ENCODE measurements at regions of chr7 and their contacts with region 1.

Region 1: DNA sequence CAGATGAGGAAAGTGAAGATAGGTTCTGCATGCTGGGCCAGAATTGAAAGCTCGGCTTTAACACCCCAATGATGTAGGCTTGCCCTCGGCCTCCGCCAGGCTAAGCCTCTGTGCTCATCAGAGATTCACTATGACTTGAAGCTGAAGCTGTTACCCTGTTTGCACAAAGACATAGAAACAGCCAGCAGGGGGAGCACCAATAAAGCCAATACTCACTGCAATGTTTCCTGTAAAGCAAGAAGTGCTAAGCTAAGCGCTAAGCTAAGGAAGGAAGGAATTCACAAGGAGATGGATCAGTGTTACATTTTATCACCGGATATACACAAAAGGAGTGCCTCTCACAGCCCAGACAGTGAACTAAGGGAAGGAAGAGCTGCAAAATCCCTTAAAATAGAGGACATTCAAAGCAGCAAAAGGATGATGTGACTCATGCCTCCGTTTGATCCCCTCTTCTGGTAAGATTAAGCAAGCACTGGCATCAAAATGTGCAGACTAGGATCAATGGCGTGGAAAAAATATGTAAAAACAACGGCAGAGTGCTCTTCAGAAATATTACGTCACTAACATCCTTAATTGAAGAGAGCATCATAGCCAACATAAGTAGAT is 153.8 kb downstream of the COBL start:
- DNase-seq: peak; percentile 77
- H3K4me3 ChIP-seq: no peak overlapping the region
- H3K27ac ChIP-seq: no peak overlapping the region
- H3K4me1 ChIP-seq: no peaks in the 10 kb centered on the region
- H3K27me3 ChIP-seq: no peaks in the 10 kb centered on the region
- CTCF ChIP-seq: peak; percentile 83

Region 2: GRCh38 chr7:50467817-50468610 is 694.8 kb before region 1 on chr7:
- CTCF ChIA-PET with region 1: interaction called, 3 read pairs
- POLR2A ChIA-PET with region 1: no interaction called
- intact Hi-C with region 1: loop called (anchors 1 kb)
- DNase-seq: peak; percentile 78
- H3K4me3 ChIP-seq: no peak overlapping the region
- H3K27ac ChIP-seq: no peak overlapping the region
- H3K4me1 ChIP-seq: no peaks in the 10 kb centered on the region
- H3K27me3 ChIP-seq: no peaks in the 10 kb centered on the region
- CTCF ChIP-seq: peak; percentile 82

Region 3: DNA sequence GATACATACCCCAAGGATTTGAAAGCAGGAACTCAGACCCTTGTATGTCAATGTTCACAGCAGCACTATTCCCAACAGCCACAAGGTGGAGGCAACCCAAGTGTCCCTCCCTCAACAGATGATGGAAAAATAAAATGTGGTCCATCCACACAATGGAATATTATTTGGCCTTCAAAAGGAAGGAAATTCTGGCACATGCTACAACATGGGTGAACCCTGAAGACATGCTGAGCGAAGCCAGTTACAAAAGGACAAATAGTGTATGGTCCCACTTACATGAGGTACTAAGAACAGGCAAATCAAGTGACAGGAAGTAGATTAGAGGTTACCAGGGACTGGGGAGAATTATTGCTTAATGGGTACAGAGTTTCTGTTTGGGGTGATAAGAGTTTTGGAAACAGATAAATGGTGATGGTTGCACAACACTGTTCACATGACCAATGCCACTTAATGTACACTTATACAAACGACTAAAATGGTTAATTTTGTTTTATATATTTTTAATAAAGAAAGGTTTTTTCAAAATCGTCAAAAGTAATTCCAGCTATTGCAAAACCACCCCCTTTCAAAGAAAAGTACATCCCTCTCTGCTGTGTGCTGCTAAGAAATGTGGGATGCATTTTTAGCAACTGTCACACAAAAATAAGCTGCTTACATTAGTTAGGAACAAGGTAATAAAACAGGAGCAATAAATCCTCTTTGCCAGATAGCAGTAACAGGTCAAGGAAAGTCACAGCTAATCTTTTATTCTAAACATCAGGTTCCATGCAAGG is 465.8 kb before region 1 on chr7:
- CTCF ChIA-PET with region 1: no interaction called
- POLR2A ChIA-PET with region 1: no interaction called
- intact Hi-C with region 1: loop called (anchors 10 kb)
- DNase-seq: no peak
- H3K4me3 ChIP-seq: no peak overlapping the region
- H3K27ac ChIP-seq: no peak overlapping the region
- H3K4me1 ChIP-seq: no peaks in the 10 kb centered on the region
- H3K27me3 ChIP-seq: peaks cover 4% of the 10 kb centered on the region
- CTCF ChIP-seq: peak; percentile 28; the same call in 1 of the 2 replicates

Region 4: GRCh38 chr7:51366930-51367613 is 204.2 kb after region 1 on chr7:
- CTCF ChIA-PET with region 1: interaction called, 3 read pairs
- POLR2A ChIA-PET with region 1: no interaction called
- intact Hi-C with region 1: loop called (anchors 10 kb)
- DNase-seq: peak; percentile 7
- H3K4me3 ChIP-seq: no peak overlapping the region
- H3K27ac ChIP-seq: no peak overlapping the region
- H3K4me1 ChIP-seq: no peaks in the 10 kb centered on the region
- H3K27me3 ChIP-seq: no peaks in the 10 kb centered on the region
- CTCF ChIP-seq: peak; percentile 42

Region 5: DNA sequence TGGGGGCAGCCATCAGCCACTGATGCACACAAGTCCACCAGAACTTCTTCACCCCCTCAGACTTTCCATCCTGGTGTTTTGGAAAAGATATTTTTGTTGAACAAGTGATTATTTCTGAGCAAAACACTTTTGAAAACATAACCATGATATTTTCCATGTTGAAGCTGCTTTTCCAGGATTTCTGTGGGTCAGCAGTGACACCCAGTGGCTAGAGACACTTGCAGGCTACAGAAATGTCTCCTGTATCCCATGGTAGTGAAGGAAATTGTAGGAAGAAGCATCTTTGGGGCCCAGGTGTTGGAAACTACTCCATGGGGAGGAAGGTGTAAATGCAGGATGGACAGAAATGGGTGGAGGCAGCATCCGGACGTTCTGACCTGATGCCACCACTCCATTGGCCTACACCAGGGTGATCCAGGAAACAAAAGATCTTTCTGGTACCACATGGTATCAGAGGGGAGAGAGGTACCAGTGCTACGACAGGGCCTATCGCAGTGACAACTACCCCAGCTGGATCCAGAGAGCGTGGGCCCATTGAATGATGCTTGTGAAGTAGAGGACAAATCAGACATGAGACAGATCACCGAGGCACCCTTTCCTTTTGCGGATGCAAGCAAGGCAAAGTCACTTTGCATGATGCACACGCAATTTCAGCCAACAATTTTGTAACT is 265.5 kb after region 1 on chr7:
- CTCF ChIA-PET with region 1: interaction called, 4 read pairs
- POLR2A ChIA-PET with region 1: no interaction called
- intact Hi-C with region 1: loop called (anchors 5 kb)
- DNase-seq: no peak
- H3K4me3 ChIP-seq: no peak overlapping the region
- H3K27ac ChIP-seq: no peak overlapping the region
- H3K4me1 ChIP-seq: no peaks in the 10 kb centered on the region
- H3K27me3 ChIP-seq: no peaks in the 10 kb centered on the region
- CTCF ChIP-seq: no peak